MCF 10A (cell line): ENCODE measurements at regions of chr11 and their contacts with region 1.

Region 1: DNA sequence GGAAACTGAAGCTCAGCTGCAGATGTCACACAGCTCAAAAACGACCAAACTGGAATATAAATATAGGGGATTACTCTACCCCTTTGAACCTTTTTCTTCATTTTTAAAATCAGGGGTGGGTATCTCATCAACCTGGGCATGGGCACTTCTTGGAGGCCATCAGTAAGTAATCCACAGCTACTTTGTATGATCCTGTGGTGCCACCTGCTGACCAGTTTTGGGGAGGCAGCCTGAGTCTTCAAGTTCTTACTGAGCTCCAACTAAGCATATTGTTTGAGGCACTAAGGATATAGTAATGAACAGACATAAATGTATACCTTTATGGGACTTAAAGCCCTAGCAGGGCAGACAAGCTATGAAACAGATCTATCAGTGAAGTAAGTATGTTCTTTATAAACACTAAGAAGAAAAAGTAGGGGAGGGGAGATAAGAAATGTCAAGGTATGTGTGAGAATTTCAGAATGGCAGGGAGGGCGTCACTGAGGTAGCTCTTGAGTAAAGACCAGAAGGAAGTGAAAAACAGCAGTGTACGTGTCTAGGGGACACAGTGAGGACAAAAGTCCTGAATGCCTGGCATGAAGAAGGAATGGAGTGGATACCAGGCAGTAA is 18.4 kb downstream of the TUB start:
- DNase-seq: peak; percentile 75
- H3K4me3 Mint-ChIP-seq: no peak overlapping the region
- H3K27ac Mint-ChIP-seq: no peak overlapping the region
- H3K4me1 Mint-ChIP-seq: no peaks in the 10 kb centered on the region
- H3K27me3 Mint-ChIP-seq: no peaks in the 10 kb centered on the region
- CTCF ChIP-seq: peak; percentile 95

Region 2: GRCh38 chr11:8006349-8006977 is 92.9 kb before region 1 on chr11:
- CTCF ChIA-PET with region 1: interaction called, 675 read pairs
- POLR2A ChIA-PET with region 1: interaction called, 10 read pairs
- intact Hi-C with region 1: loop called (anchors 1 kb)
- DNase-seq: peak; percentile 72
- H3K4me3 Mint-ChIP-seq: no peak overlapping the region
- H3K27ac Mint-ChIP-seq: no peak overlapping the region
- H3K4me1 Mint-ChIP-seq: no peaks in the 10 kb centered on the region
- H3K27me3 Mint-ChIP-seq: peaks cover 11% of the 10 kb centered on the region
- CTCF ChIP-seq: peak; percentile 94

Region 3: DNA sequence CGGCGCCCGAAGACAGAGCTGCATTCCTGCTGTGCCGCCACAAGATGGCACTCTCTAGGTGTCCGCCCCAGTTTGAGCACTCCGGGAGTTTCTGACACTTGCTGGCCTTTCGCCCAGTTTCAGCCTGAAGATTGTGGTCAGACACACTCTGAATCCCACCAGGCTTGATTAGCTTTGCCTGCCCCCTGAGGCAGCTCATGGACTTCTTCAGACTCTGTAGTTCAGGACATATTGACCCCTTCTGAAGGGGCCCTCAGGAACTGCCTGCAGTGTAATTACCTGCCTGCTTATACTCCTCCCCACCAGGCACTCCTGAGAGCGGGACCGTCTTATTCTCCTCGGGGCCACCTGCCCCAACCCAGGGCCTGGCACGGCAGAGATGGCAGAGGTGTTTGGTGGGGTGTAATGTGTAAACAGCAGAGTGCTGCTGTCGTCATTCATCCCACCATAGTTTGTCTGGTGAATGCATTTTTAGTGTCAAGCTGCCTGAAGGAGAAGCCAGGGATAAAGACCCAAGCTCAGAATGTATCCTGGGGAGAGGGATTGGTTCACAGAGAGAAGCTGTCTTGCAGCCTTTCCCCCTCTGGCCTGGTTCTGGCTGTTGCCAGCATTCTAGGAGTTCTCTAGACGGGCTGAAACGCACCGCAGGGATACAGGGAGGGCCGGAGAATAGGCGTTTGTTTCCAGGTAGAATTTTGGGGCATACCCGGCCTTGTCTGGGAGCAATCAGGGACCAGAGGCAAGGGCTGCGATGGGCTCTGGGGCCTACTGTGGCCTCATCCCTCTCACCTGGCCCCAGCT is 65.9 kb before region 1 on chr11:
- CTCF ChIA-PET with region 1: interaction called, 786 read pairs
- POLR2A ChIA-PET with region 1: interaction called, 5 read pairs
- intact Hi-C with region 1: loop called (anchors 1 kb)
- DNase-seq: peak; percentile 75
- H3K4me3 Mint-ChIP-seq: no peak overlapping the region
- H3K27ac Mint-ChIP-seq: no peak overlapping the region
- H3K4me1 Mint-ChIP-seq: peaks cover 5% of the 10 kb centered on the region
- H3K27me3 Mint-ChIP-seq: peaks cover 54% of the 10 kb centered on the region
- CTCF ChIP-seq: peak; percentile 85

Region 4: DNA sequence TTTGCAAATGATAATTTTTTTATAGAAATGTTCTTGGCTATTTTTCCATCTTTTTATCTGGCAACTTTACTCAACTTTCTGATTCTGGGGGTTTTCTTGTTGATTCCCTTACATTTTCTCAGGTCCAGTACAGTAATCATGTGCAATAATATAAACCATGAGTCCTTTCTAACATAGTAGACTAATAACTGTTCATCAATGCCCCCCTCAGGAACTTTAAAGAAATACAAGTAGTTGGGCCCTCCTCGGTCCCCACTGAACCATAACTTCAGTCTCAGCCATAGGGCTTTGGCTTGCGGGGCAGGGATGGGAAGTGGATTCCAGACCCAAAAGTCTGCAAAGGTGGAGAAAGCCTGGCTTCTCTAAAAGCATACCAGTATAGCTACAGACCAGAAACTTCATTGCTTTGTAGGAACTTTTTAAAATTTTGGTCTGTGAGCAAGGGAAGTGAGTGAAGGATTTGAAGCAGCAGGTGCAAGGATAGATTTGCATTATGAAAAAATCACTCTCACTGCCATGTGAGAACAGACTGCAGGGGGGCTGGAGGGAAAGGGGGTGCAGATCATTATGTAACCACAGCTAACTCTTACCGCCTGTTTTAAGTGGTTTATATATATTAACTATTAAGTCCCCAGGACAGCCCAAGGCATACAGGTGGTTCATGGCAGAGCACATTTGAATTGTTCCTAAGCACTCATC is 28.8 kb before region 1 on chr11:
- CTCF ChIA-PET with region 1: interaction called, 20 read pairs
- POLR2A ChIA-PET with region 1: no interaction called
- intact Hi-C with region 1: no loop called
- DNase-seq: peak; percentile 38
- H3K4me3 Mint-ChIP-seq: no peak overlapping the region
- H3K27ac Mint-ChIP-seq: no peak overlapping the region
- H3K4me1 Mint-ChIP-seq: peaks cover 17% of the 10 kb centered on the region
- H3K27me3 Mint-ChIP-seq: peaks cover 15% of the 10 kb centered on the region
- CTCF ChIP-seq: peak; percentile 18

Region 5: DNA sequence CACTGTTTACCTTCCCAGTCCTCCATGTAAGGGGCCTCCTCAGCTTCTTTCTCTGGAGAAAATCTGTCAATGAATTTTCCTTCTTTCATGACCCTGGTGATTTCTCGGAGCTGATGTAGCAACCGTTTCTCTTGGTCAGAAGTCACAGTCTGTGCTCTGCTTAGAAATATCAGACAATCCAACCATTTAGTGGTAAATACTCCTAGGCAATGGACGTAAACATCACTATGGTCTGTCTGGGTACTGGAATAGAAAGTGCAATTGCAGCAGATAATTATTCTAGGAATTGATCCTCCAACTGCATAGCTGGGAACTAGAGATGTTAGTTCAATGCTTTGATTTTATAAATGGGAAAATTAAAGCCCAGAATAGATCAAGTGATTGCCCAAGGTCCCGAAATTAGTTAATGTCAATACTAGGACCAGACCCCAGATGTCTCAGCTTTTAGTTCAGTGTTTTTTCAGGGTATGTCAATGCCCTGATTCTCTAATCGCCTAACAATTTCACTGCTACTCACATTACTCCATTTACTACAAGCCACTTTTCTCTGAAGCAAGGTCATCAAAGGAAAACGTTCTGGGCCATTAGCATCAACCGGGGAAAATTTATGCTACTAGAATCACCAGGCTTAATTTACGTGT is 27.4 kb after region 1 on chr11:
- CTCF ChIA-PET with region 1: interaction called, 41 read pairs
- POLR2A ChIA-PET with region 1: no interaction called
- intact Hi-C with region 1: no loop called
- DNase-seq: no peak
- H3K4me3 Mint-ChIP-seq: no peak overlapping the region
- H3K27ac Mint-ChIP-seq: no peak overlapping the region
- H3K4me1 Mint-ChIP-seq: no peaks in the 10 kb centered on the region
- H3K27me3 Mint-ChIP-seq: no peaks in the 10 kb centered on the region
- CTCF ChIP-seq: no peak